ENCODE measurements at regions of chr15 and their contacts with region 1.

Region 1: DNA sequence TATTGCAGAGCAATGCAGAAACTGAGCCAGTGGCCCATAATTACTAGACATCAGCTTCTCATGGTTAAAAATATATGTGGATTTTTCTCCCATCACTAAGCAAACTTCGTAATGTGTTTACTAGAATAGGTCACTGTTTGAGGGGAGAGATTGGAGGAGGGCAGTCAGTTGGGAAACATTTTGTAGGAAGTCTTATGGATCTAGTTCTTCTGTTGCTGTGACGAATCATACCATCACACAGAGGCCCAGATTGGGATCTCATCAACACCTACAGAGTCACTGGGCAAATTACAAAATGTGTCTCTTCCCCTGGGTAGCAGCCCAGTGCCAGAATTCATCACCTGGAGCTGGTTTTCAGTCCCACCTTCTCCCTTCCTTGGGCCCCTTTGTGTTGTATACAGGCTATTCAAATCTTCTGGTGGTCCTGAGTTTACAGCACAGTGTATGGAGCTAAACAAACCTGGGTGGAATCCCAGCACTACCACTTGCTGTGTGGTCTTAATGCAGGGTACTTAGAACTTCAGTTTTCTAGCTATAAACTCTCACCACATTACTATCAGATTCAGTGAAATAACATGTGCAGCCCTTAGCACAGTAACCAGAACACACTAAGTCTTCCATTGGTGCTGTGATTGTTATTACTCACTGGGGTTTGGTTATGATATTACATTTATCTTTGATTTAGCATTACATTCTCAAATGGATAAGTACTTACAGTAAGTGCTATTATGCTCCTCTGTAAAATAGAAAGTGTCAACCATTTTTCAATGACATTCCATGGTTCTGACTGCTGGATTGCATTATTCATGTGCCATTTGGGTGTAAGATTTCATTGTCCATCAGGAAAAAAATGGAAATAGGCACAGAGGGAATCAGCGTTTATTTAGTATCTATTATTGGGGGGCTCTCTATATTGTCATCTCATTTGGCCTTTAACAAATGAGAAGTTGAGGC is 81.7 kb downstream of the PDE8A start:
- DNase-seq: no peak
- ATAC-seq: no peak
- H3K4me3 ChIP-seq: no peak overlapping the region
- H3K27ac ChIP-seq: no peak overlapping the region
- H3K4me1 ChIP-seq: no peaks in the 10 kb centered on the region
- H3K27me3 ChIP-seq: no peaks in the 10 kb centered on the region
- CTCF ChIP-seq: no peak
- EP300 ChIP-seq: no peak
- POLR2A ChIP-seq: no peak
- RAD21 ChIP-seq: no peak

Region 2: GRCh38 chr15:84929744-84930371 is 133.5 kb before region 1 on chr15:
- CTCF ChIA-PET with region 1: no interaction called
- POLR2A ChIA-PET with region 1: no interaction called
- in situ Hi-C with region 1: no loop called
- intact Hi-C with region 1: no loop called
- DNase-seq: peak; percentile 67 to 86 (median 71)
- ATAC-seq: peak; percentile 82
- H3K4me3 ChIP-seq: no peak overlapping the region
- H3K27ac ChIP-seq: peak overlapping the region; percentile 62
- H3K4me1 ChIP-seq: peaks cover 16 to 22% of the 10 kb centered on the region in 2 experiments
- H3K27me3 ChIP-seq: no peaks in the 10 kb centered on the region
- CTCF ChIP-seq: no peak
- EP300 ChIP-seq: peak; percentile 66
- POLR2A ChIP-seq: no peak
- RAD21 ChIP-seq: no peak

Region 3: DNA sequence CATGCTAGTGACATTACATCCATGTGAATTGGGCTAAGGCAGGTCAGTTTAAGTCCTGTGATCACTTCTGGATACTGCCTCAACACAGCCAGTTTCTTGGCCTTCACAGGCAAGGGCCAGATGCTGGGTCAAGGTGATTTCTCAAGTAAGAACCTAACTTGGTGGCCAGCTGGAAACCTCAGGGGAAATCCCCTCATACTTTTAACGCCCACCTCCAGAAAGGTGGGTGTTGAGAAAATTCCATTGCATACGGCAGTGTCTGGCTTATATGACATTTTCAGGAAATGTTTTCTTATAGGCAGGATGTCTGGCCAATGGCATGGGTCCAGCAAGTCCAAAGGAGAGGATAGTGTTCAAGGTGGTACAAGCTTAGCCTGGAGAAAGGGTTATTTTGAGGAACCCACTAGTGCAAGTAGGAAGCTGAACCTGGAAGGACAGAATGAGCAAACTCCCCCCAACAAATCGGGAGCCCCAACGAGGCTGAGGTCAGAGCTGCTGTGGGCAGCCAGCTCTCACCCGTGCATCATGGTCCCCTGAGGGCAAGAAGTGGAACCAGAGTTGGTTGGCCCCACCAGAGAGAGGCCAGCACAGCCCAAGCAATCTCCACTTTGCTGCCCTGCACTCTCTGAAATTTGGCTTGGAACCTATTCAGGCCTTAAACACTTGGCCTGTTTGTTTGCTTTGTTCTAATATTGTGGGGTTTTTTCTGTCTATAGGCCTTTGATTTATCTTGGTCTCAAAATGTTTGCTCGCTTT is 53.7 kb after region 1 on chr15:
- CTCF ChIA-PET with region 1: no interaction called
- POLR2A ChIA-PET with region 1: no interaction called
- in situ Hi-C with region 1: no loop called
- intact Hi-C with region 1: loop called (anchors 5 kb)
- DNase-seq: no peak
- ATAC-seq: no peak
- H3K4me3 ChIP-seq: no peak overlapping the region
- H3K27ac ChIP-seq: no peak overlapping the region
- H3K4me1 ChIP-seq: peaks cover 8 to 30% of the 10 kb centered on the region in 2 experiments; a peak in 3 of 5 replicates
- H3K27me3 ChIP-seq: no peaks in the 10 kb centered on the region
- CTCF ChIP-seq: no peak
- EP300 ChIP-seq: no peak
- POLR2A ChIP-seq: no peak
- RAD21 ChIP-seq: no peak

Region 4: GRCh38 chr15:85534031-85534430 is 470.6 kb after region 1 on chr15:
- CTCF ChIA-PET with region 1: no interaction called
- POLR2A ChIA-PET with region 1: no interaction called
- in situ Hi-C with region 1: no loop called
- intact Hi-C with region 1: no loop called
- DNase-seq: no peak
- ATAC-seq: no peak
- H3K4me3 ChIP-seq: no peak overlapping the region
- H3K27ac ChIP-seq: no peak overlapping the region
- H3K4me1 ChIP-seq: no peaks in the 10 kb centered on the region
- H3K27me3 ChIP-seq: no peaks in the 10 kb centered on the region; a peak in 1 of 5 replicates
- CTCF ChIP-seq: no peak
- EP300 ChIP-seq: no peak
- POLR2A ChIP-seq: no peak
- RAD21 ChIP-seq: no peak